ENCODE measurements at regions of chr9 and their contacts with region 1.

Region 1: DNA sequence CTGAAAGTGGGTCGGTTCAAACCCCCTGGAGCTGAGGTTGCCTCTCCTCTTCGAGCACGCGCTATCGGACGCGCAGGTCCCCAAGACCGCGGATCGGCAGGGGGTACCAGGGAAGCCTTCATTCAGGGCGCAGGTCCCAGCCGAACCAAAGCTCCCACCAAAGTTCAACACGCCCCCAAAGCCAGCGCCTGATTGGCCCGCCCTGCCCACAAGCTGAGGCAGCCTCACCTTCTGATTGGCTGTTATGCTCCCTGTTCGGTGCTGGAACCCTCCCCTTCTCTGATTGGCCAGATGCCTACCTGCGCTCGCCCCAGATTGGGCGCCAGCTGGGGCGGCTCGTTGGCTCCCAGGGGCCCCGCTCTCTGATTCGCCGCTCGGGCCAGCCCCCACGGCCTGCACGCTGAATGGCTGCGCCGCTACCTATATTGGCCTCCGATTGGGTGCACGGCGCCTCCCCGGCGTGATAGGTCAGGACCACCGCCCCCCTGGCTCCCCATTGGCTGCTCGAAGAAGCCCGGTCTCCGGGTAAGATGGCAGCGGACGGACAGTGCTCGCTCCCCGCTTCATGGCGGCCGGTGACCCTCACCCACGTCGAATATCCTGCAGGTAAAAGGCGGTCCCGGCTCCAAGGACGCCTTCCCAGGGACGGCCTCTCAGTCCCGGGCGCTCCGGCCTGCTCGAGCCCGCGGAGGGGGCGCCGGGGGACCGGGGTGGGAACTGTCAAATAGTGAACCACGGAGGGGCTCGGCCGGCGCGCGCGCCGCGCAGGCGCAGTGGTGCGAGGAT is at the start of gene DOLPP1:
- DNase-seq: peak; percentile 98
- H3K4me3 ChIP-seq: peak within 1 kb of the TSS; percentile 80
- CTCF ChIP-seq: no peak

Region 2: GRCh38 chr9:129036241-129036922 is 44.4 kb before region 1 on chr9 and contains the start of gene MIGA2:
- in situ Hi-C with region 1: loop called (anchors 10 kb)
- DNase-seq: peak; percentile 98
- H3K4me3 ChIP-seq: peak within 1 kb of the TSS; percentile 98
- CTCF ChIP-seq: no peak